Vagina (tissue), 2 donors: ENCODE measurements at regions of chr18 and their contacts with region 1.

Region 1: DNA sequence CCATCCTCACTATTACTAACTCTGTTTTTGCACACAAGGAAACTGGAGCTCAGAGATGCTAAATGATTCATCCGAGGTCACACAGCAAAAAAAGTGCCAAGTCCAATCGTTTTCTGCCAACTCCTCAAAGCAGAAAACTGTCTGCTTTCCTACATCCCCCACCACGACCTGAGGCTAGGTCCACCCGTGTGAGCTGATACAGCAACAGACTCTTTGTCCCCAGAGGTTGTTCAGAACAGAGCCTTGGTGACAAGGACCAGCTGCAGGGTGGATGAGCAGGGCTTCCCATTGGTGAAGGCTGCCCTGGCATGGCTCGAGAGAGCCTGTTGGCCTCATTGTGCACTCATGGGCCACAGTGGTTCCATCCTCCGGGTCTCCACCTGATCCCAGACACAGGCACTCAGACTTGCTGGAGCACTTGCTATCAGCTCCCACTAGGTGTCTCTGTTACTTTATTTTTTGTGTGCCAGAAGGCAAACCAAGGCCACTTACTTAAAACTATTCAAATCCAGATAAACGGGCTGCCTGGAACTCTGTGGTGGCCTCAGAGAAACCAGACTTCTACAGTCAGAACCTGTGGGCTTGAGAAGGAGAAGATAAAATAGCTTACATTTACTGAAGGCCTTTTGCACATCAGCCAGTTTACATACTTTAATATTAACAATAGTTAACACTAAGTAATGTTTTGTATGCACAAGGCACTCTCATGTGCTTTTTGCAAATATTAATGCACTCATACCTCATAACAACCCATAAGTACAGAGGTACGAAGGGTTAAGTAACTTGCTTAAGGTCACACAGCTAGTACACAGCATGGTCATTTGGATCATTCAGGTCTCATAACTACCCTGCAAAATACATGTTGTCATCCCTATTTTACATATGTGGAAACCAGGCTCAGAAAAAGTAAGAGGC is 62.9 kb upstream of the CTIF start:
- DNase-seq: no peak
- H3K4me3 ChIP-seq: no peak overlapping the region
- H3K27ac ChIP-seq: no peak overlapping the region
- H3K4me1 ChIP-seq: peaks cover 2% of the 10 kb centered on the region
- H3K27me3 ChIP-seq: no peaks in the 10 kb centered on the region
- CTCF ChIP-seq: peak; percentile 67 to 84 (median 77)
- POLR2A ChIP-seq: no peak

Region 2: DNA sequence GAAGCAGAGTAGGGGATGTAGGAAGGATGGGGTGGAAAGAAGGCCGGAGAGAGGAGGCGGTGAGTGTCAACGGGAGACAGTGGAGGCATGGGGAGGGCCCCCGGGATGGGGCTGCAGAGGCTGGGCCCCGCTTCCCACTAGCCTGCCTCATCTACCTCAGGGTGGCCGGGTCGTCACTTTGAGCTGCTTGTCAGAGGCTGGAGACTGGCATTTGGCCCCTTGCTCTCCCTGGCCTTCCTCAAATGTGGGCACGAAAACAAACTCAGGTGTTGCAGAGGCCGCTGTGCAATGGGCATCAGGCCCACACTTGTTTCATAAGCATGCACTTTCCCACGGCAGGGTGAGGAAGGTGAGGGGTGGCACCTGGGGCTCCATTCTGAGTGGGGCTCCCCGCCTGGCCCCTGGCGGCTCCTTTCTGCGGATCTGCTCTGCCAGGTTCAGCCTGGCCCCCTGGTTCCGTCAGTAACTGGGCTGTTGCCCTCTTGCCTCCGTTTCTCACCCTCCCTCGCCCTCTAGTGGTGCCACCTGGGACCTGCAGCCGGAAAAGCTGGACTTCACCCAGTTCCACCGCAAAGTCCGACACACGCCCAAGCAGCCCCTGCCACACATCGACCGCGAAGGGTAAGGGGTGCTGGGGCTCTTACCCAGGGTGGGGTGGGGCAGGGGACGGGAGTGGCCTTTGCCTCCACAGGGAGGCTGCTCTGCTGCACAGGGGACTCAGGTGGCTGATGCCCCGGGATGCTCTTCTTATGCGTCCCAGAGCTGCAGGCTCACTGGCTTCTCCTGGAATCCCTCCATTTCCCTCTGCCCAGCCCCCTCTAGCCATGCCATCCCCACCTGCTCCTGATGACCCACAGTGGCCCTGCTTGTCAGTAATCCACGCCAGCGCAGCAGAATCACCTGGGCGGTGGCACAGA is 188.3 kb after region 1 on chr18:
- intact Hi-C with region 1: loop called (anchors 5 kb)
- DNase-seq: no peak
- H3K4me3 ChIP-seq: no peak overlapping the region
- H3K27ac ChIP-seq: no peak overlapping the region
- H3K4me1 ChIP-seq: peaks cover 14% of the 10 kb centered on the region
- H3K27me3 ChIP-seq: no peaks in the 10 kb centered on the region
- CTCF ChIP-seq: peak; percentile 30 to 76 (median 73)
- POLR2A ChIP-seq: no peak